ENCODE measurements at regions of chr19 and their contacts with region 1.

Region 1: DNA sequence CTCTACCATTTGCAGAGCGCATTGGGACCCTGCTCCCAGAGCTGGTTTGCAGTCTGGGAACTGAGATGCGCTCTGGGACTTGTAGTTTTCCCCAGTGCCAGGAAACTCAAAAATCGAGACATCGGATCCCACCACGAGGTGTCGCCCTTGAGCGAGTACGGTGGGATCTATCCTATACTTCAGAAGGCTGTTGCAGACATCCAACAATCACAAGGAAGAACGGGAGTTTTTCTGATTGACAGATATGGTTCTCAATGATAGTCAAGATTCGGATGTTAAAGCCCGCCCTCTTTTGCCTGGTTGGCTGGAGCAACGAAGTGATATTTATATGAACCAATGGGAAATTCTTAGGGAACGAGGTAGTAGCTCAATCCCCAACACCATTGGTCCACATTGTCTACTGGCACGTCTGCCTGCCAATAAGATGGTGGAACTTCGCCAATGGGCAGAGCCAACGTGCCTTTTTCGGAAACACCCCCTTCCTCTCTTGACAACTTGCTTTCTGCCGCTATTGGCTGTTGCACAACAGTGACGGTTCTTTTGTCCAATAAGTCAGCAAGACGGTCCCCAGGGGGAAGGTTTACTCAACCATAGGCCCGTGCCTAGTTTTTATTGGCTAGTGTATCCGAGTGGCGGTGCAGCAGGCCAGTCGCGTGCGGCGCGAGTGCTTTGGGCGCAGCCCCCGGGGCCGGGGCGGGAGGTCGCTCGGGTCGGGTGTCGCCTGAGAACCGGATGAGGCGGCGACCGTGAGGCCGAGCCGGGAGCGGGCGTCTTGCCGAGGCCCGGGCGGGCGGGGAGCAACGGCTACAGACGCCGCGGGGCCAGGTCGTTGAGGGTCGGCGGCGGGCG is at the start of gene DNM2:
- DNase-seq: peak; percentile 100
- ATAC-seq: peak; percentile 91
- H3K4me3 Mint-ChIP-seq: peak within 1 kb of the TSS; percentile 89
- H3K27ac Mint-ChIP-seq: peak within 1 kb of the TSS; percentile 90
- H3K4me1 Mint-ChIP-seq: peaks cover 12% of the 10 kb centered on the region
- H3K27me3 Mint-ChIP-seq: no peaks in the 10 kb centered on the region
- CTCF ChIP-seq: peak; percentile 70
- total RNA-seq, gene DNM2: 120 to 131 TPM (median 123 TPM) in 3 replicates

Region 2: GRCh38 chr19:10416380-10417257 is 301.0 kb before region 1 on chr19:
- CTCF ChIA-PET with region 1: interaction called, 13 read pairs
- POLR2A ChIA-PET with region 1: no interaction called
- DNase-seq: peak; percentile 97
- ATAC-seq: peak; percentile 52
- H3K4me3 Mint-ChIP-seq: peak overlapping the region; percentile 72
- H3K27ac Mint-ChIP-seq: peak overlapping the region; percentile 90
- H3K4me1 Mint-ChIP-seq: peaks cover 26% of the 10 kb centered on the region
- H3K27me3 Mint-ChIP-seq: peaks cover 85% of the 10 kb centered on the region
- CTCF ChIP-seq: peak; percentile 99

Region 3: DNA sequence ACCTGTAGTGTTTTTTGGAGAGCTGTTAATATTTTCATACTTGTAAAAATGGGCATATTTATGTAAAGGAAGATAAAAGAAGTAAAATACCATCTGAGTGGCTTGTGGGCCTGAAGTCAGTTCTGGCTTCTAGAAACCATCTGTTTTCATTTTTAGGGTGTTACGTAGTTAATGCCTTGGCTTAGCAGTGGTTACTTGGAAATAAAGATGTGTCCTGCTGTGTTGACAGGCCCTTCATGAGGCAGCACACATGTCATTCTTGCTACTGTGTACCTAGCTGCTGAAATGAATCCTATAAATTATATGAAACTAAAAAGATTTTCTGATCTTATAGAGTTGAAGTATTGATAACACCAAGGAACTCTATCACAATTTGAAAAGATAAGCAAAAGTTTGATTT is 47.4 kb before region 1 on chr19:
- CTCF ChIA-PET with region 1: no interaction called
- POLR2A ChIA-PET with region 1: no interaction called
- DNase-seq: no peak
- ATAC-seq: no peak
- H3K4me3 Mint-ChIP-seq: no peak overlapping the region
- H3K27ac Mint-ChIP-seq: 0 out of 2 replicates have a peak overlapping the region, but pooled peaks have one; percentile 63
- H3K4me1 Mint-ChIP-seq: 0 out of 2 replicates have a peak, but pooled peaks cover 4% of the 10 kb centered on the region
- H3K27me3 Mint-ChIP-seq: no peaks in the 10 kb centered on the region
- CTCF ChIP-seq: no peak

Region 4: GRCh38 chr19:10695401-10696398 is 21.9 kb before region 1 on chr19:
- CTCF ChIA-PET with region 1: interaction called, 107 read pairs
- POLR2A ChIA-PET with region 1: interaction called, 5 read pairs
- DNase-seq: peak; percentile 99
- ATAC-seq: peak; percentile 88
- H3K4me3 Mint-ChIP-seq: peak overlapping the region; percentile 76
- H3K27ac Mint-ChIP-seq: peak overlapping the region; percentile 98
- H3K4me1 Mint-ChIP-seq: peaks cover 22% of the 10 kb centered on the region
- H3K27me3 Mint-ChIP-seq: peaks cover 5% of the 10 kb centered on the region
- CTCF ChIP-seq: no peak

Region 5: DNA sequence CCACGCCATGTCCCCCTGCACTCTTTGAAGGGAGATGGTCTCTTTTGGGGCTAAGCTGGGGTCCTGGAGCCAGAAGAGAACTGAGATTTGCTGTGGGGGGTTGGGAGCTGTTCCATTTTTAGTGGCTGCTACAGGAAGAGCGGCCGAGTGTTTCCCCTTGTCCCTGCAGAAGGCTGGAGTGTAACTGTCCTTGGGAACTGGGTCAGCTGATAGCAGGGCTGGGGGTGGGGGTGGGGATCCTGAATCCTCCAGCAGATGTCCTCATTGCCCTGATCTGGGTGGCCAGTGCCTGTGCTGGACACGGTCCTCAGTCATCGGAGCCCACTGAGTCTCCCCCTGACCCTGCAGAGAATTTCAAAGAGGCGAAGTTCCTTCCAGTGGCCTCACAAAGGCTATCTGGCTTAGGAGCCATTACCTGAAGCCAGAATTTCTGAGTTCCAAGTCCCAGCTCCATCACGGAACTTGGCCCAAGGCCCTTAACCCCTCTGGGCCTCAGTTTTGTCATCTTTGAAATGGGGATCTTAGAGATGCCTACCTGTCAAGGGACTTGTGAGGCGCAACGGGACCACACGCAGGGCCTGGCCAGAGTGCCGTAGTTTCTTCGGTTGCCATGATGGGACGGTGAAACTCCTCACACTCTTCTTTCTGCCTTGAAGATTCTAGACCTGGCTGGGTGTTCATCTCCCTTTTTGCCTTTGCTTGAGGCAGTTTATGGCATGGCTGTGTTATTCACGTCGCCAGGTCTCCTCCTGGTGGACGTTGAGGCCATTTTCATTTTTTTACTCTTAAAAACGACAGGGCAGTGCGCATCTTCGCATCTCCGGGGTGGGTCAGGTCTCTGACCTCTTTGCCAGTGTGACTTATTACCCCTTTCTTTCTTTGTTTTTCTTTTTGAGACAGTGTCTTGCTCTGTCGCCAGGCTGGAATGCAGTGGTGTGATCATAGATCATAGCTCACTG is 52.2 kb after region 1 on chr19:
- CTCF ChIA-PET with region 1: interaction called, 20 read pairs
- POLR2A ChIA-PET with region 1: interaction called, 3 read pairs
- DNase-seq: no peak
- ATAC-seq: no peak
- H3K4me3 Mint-ChIP-seq: no peak overlapping the region
- H3K27ac Mint-ChIP-seq: peak overlapping the region; percentile 96
- H3K4me1 Mint-ChIP-seq: peaks cover 15% of the 10 kb centered on the region
- H3K27me3 Mint-ChIP-seq: no peaks in the 10 kb centered on the region
- CTCF ChIP-seq: no peak

Region 6: DNA sequence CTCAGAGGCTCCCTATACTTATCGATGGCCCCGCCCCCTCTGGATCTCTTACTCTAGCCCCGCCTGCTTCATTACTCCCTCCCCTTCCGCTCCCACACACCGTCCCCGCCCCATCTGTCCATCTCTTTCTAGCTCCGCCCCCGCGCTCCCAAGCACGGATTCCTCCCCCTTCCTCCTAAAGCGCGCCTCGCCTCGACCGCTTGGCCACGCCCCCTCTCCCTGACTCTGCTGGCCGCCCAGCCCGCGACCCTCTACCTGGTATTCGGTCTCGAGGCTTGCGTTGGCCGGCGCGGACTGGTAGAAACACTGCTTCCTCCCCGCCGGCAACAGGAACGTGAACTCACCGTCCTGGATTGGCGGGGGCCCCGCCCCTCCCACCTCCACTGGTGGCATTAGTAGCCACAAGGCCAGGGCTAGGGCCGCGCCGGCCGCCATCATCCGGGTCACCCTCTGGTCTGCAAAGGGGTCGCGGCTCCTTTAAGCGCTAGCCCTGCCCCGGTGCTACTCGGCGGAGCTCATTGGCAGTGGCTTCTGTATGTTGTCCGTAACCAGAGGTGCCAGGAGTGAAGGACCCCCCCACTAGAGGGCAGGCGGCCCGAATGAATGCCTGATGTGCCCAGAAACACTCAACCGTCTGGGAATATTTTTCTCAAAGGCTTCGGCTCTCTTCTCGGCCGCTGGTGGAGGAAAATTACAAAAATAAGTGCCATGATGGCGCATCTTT is 118.3 kb after region 1 on chr19 and contains the start of gene TMED1:
- CTCF ChIA-PET with region 1: interaction called, 25 read pairs
- POLR2A ChIA-PET with region 1: interaction called, 5 read pairs
- DNase-seq: peak; percentile 100
- ATAC-seq: peak; percentile 93
- H3K4me3 Mint-ChIP-seq: peak within 1 kb of the TSS; percentile 85
- H3K27ac Mint-ChIP-seq: peak within 1 kb of the TSS; percentile 100
- H3K4me1 Mint-ChIP-seq: peaks cover 13% of the 10 kb centered on the region
- H3K27me3 Mint-ChIP-seq: peaks cover 24% of the 10 kb centered on the region
- CTCF ChIP-seq: peak; percentile 36; the same call in 1 of the 2 replicates
- total RNA-seq, gene TMED1: 28.5 to 40.9 TPM (median 40.6 TPM) in 3 replicates

Region 7: GRCh38 chr19:10870955-10871603 is 153.5 kb after region 1 on chr19 and contains the start of gene CARM1:
- CTCF ChIA-PET with region 1: interaction called, 53 read pairs
- POLR2A ChIA-PET with region 1: no interaction called
- DNase-seq: peak; percentile 99
- ATAC-seq: peak; percentile 90
- H3K4me3 Mint-ChIP-seq: peak within 1 kb of the TSS; percentile 90
- H3K27ac Mint-ChIP-seq: peak within 1 kb of the TSS; percentile 93
- H3K4me1 Mint-ChIP-seq: peaks cover 23% of the 10 kb centered on the region
- H3K27me3 Mint-ChIP-seq: no peaks in the 10 kb centered on the region; the same call in 1 of the 2 replicates
- CTCF ChIP-seq: peak; percentile 56
- total RNA-seq, gene CARM1: 125 to 126 TPM (median 126 TPM) in 3 replicates